Ascending aorta (tissue), 2 donors: ENCODE measurements at regions of chr10 and their contacts with region 1.

Region 1: GRCh38 chr10:112949875-112950507 is at the start of gene TCF7L2:
- DNase-seq: peak; percentile 92 to 98
- H3K4me3 ChIP-seq: peak within 1 kb of the TSS; percentile 81 to 83
- H3K27ac ChIP-seq: peak within 1 kb of the TSS; percentile 90 to 92
- H3K4me1 ChIP-seq: peaks cover 0 to 27% of the 10 kb centered on the region in 2 donors
- H3K27me3 ChIP-seq: no peaks in the 10 kb centered on the region
- CTCF ChIP-seq: no peak
- total RNA-seq, gene TCF7L2: 8.2 TPM

Region 2: GRCh38 chr10:112963835-112964234 is 13.8 kb after region 1 on chr10:
- intact Hi-C with region 1: no loop called
- DNase-seq: no peak
- H3K4me3 ChIP-seq: no peak overlapping the region
- H3K27ac ChIP-seq: peak overlapping the region; percentile 19 to 21
- H3K4me1 ChIP-seq: peaks cover 0 to 23% of the 10 kb centered on the region in 2 donors
- H3K27me3 ChIP-seq: no peaks in the 10 kb centered on the region
- CTCF ChIP-seq: no peak

Region 3: DNA sequence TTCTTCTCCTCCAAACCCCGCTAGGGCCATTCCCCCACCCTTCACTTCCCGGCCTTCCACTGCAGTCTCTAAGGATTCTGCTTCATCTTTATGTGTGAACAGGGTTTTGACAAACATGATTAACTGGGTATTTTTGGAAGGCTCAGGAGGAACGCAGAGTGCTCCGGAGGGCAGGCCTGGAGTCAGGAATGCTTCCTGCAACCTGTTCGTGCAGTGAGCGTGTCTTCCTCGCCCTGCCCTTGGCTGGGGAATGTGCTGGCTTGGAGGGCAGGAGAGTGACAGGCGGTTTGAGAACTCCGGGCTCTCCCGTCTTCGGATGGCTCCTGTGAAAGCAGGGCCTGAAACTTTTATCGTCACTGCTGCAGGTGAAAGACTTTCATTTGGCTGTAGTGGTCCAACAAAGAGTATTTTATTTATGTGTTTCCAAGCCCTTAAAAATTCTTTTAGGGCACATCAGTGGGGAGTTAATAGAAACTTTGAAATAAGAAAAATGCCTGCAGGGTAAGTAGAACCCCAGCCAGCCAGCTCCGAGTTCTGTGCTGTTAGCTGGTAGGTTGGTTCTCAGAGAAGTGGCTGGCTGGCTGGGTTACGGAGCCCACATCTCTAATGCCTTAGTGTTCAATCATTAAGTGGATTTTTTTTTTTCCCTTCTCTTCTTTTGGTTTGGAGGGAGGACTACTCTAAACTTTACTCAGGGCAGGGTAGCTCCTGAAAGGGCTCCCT is 51.0 kb after region 1 on chr10:
- intact Hi-C with region 1: loop called (anchors 5 kb)
- DNase-seq: no peak
- H3K4me3 ChIP-seq: peak overlapping the region in 1 of 2 donors; percentile 17
- H3K27ac ChIP-seq: peak overlapping the region; percentile 56 to 76
- H3K4me1 ChIP-seq: peaks cover 3 to 50% of the 10 kb centered on the region in 2 donors
- H3K27me3 ChIP-seq: no peaks in the 10 kb centered on the region
- CTCF ChIP-seq: peak in 2 of 3 experiments; percentile 22 to 31

Region 4: GRCh38 chr10:113052076-113052830 is 102.3 kb after region 1 on chr10:
- intact Hi-C with region 1: loop called (anchors 1 kb)
- DNase-seq: no peak
- H3K4me3 ChIP-seq: no peak overlapping the region
- H3K27ac ChIP-seq: peak overlapping the region; percentile 89 to 96
- H3K4me1 ChIP-seq: peaks cover 25 to 85% of the 10 kb centered on the region in 2 donors
- H3K27me3 ChIP-seq: no peaks in the 10 kb centered on the region
- CTCF ChIP-seq: peak in 2 of 3 experiments; percentile 18 to 40

Region 5: GRCh38 chr10:113108212-113108835 is 158.3 kb after region 1 on chr10:
- intact Hi-C with region 1: loop called (anchors 5 kb)
- DNase-seq: no peak
- H3K4me3 ChIP-seq: no peak overlapping the region
- H3K27ac ChIP-seq: peak overlapping the region in 1 of 2 donors; percentile 77
- H3K4me1 ChIP-seq: peaks cover 6 to 35% of the 10 kb centered on the region in 2 donors
- H3K27me3 ChIP-seq: no peaks in the 10 kb centered on the region
- CTCF ChIP-seq: peak in 2 of 3 experiments; percentile 37 to 48